ENCODE measurements at regions of chr1 and their contacts with region 1.

Region 1: GRCh38 chr1:159071970-159072582 is 4.5 kb downstream of the AIM2 start:
- DNase-seq: no peak
- H3K4me3 Mint-ChIP-seq: peak overlapping the region; percentile 12
- H3K27ac Mint-ChIP-seq: peak overlapping the region; percentile 37
- H3K4me1 Mint-ChIP-seq: peaks cover 70% of the 10 kb centered on the region
- H3K27me3 Mint-ChIP-seq: no peaks in the 10 kb centered on the region

Region 2: GRCh38 chr1:158716335-158716734 is 355.7 kb before region 1 on chr1:
- intact Hi-C with region 1: loop called (anchors 10 kb)
- DNase-seq: no peak
- H3K4me3 Mint-ChIP-seq: no peak overlapping the region
- H3K27ac Mint-ChIP-seq: peak overlapping the region; percentile 56
- H3K4me1 Mint-ChIP-seq: no peaks in the 10 kb centered on the region
- H3K27me3 Mint-ChIP-seq: peaks cover 8% of the 10 kb centered on the region

Region 3: GRCh38 chr1:158793604-158794003 is 278.5 kb before region 1 on chr1:
- intact Hi-C with region 1: loop called (anchors 2 kb)
- DNase-seq: peak; percentile 14
- H3K4me3 Mint-ChIP-seq: no peak overlapping the region
- H3K27ac Mint-ChIP-seq: no peak overlapping the region
- H3K4me1 Mint-ChIP-seq: no peaks in the 10 kb centered on the region
- H3K27me3 Mint-ChIP-seq: peaks cover 20% of the 10 kb centered on the region

Region 4: GRCh38 chr1:159214149-159214760 is 142.2 kb after region 1 on chr1:
- intact Hi-C with region 1: no loop called
- DNase-seq: peak; percentile 10
- H3K4me3 Mint-ChIP-seq: no peak overlapping the region
- H3K27ac Mint-ChIP-seq: no peak overlapping the region
- H3K4me1 Mint-ChIP-seq: no peaks in the 10 kb centered on the region
- H3K27me3 Mint-ChIP-seq: peaks cover 12% of the 10 kb centered on the region